ENCODE measurements at regions of chr1 and their contacts with region 1.

Region 1: GRCh38 chr1:78607334-78607927 is 12.8 kb upstream of the IFI44L start:
- DNase-seq: peak; percentile 23
- H3K4me3 ChIP-seq: no peak overlapping the region
- CTCF ChIP-seq: peak; percentile 35

Region 2: GRCh38 chr1:78145105-78145580 is 462.3 kb before region 1 on chr1:
- in situ Hi-C with region 1: loop called (anchors 10 kb)
- DNase-seq: peak; percentile 62
- H3K4me3 ChIP-seq: no peak overlapping the region
- CTCF ChIP-seq: peak; percentile 87

Measured in astrocyte of the cerebellum (primary cell).